Naive thymus-derived CD4-positive, alpha-beta T cell (primary cell): ENCODE measurements at regions of chr2 and their contacts with region 1.

Region 1: GRCh38 chr2:27303093-27304025 is 4.9 kb downstream of the UCN start:
- DNase-seq: peak in 8 of 9 donors; percentile 32 to 62 (median 54)
- ATAC-seq: peak; percentile 76
- H3K4me3 ChIP-seq: peak overlapping the region; percentile 43
- H3K4me3 Mint-ChIP-seq: peak overlapping the region; percentile 67 to 85 (median 80)
- H3K27ac ChIP-seq: peak overlapping the region; percentile 42
- H3K27ac Mint-ChIP-seq: peak overlapping the region in 7 of 9 donors; percentile 18 to 83 (median 54)
- H3K4me1 ChIP-seq: peaks cover 0 to 6% of the 10 kb centered on the region in 2 donors
- H3K4me1 Mint-ChIP-seq: peaks cover 0 to 11% (median 9%) of the 10 kb centered on the region in 7 donors
- H3K27me3 ChIP-seq: peaks cover 0 to 6% of the 10 kb centered on the region in 2 donors
- H3K27me3 Mint-ChIP-seq: peaks cover 13 to 34% (median 19%) of the 10 kb centered on the region in 5 donors

Region 2: DNA sequence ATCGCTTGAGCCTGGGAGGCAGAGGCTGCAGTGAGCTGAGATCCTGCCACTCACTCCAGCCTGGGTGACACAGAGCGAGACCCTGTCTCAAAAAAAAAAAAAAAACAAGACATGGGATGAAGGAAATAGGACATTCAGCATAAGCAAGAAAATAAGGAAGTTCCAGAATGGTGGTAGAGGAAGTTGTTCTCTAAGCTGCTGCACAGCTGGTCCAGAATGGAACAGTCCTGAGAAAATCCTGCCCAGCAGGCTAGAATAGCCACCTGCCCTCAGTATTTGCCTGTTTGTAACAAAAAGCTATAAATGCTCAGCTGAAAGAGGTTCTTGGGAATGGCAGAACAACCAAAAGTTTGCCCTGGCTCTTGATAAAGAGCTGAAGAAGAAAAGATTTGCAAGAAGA is 344.0 kb before region 1 on chr2:
- CTCF ChIA-PET with region 1: interaction called, 9 read pairs
- POLR2A ChIA-PET with region 1: interaction called, 4 read pairs
- intact Hi-C with region 1: loop called (anchors 1 to 2 kb)
- DNase-seq: no peak
- ATAC-seq: no peak
- H3K4me3 ChIP-seq: no peak overlapping the region
- H3K4me3 Mint-ChIP-seq: no peak overlapping the region
- H3K27ac ChIP-seq: no peak overlapping the region
- H3K27ac Mint-ChIP-seq: peak overlapping the region in 1 of 9 donors; percentile 14
- H3K4me1 ChIP-seq: no peaks in the 10 kb centered on the region
- H3K4me1 Mint-ChIP-seq: peaks cover 0 to 8% (median 0%) of the 10 kb centered on the region in 7 donors
- H3K27me3 ChIP-seq: no peaks in the 10 kb centered on the region
- H3K27me3 Mint-ChIP-seq: peaks cover 9 to 52% (median 35%) of the 10 kb centered on the region in 5 donors

Region 3: DNA sequence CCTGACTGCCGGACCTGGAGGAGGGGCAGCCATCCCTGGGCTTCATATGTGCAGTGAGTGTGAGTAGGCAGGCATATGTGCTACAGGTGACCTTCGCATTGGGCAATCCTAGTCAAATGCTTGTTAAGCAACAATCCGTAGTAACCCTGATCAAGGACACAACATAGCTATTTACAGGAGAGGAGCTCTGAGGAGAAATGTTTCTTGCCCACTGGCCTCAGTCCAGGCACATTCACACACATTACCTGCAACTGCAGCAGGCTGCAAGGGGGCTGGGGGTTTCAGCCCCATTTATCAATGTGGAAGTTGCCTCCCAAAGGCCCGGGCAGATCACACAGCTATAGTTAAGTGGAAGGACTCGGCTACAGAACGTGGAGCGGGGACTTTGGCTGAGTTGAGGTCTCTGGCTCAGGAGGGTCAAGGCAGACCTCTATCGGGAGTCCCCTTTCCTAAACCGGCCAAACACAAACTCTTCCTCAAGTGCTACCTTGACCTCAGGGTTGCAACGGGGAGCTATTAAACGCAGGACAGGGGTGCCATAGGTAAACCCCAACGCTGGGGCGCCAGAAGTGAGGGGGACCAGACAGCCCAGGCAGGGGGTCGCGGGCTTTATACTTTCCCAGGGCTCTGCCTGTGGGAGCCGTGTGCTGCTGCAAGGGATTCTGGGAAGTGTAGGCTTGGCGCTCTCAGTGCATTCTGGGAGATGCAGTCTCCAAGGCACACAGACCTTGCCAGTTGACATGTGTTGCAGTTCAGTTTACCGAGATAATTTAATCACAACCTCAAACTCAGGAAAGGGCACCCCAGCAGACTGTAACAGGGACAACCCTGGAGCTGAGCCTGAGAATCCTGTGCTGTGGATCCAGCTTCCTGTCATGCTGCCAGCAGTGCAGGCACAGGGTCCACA is 207.4 kb before region 1 on chr2:
- CTCF ChIA-PET with region 1: interaction called, 12 read pairs
- POLR2A ChIA-PET with region 1: no interaction called
- intact Hi-C with region 1: loop called (anchors 1 kb)
- DNase-seq: peak in 4 of 9 donors; percentile 21 to 44 (median 39)
- ATAC-seq: peak; percentile 80
- H3K4me3 ChIP-seq: peak overlapping the region; percentile 25
- H3K4me3 Mint-ChIP-seq: peak overlapping the region in 9 of 10 donors; percentile 29 to 76 (median 67)
- H3K27ac ChIP-seq: no peak overlapping the region
- H3K27ac Mint-ChIP-seq: peak overlapping the region in 2 of 9 donors; percentile 25 to 41
- H3K4me1 ChIP-seq: peaks cover 0 to 4% of the 10 kb centered on the region in 2 donors
- H3K4me1 Mint-ChIP-seq: peaks cover 9 to 16% (median 11%) of the 10 kb centered on the region in 7 donors
- H3K27me3 ChIP-seq: no peaks in the 10 kb centered on the region
- H3K27me3 Mint-ChIP-seq: no peaks in the 10 kb centered on the region

Region 4: GRCh38 chr2:27249891-27250651 is 53.3 kb before region 1 on chr2:
- CTCF ChIA-PET with region 1: no interaction called
- POLR2A ChIA-PET with region 1: no interaction called
- intact Hi-C with region 1: loop called (anchors 1 to 2 kb)
- DNase-seq: peak; percentile 24 to 72 (median 37)
- ATAC-seq: peak; percentile 77
- H3K4me3 ChIP-seq: no peak overlapping the region
- H3K4me3 Mint-ChIP-seq: no peak overlapping the region
- H3K27ac ChIP-seq: no peak overlapping the region
- H3K27ac Mint-ChIP-seq: no peak overlapping the region
- H3K4me1 ChIP-seq: no peaks in the 10 kb centered on the region
- H3K4me1 Mint-ChIP-seq: peaks cover 0 to 6% (median 0%) of the 10 kb centered on the region in 7 donors
- H3K27me3 ChIP-seq: peaks cover 0 to 4% of the 10 kb centered on the region in 2 donors
- H3K27me3 Mint-ChIP-seq: peaks cover 3 to 22% (median 13%) of the 10 kb centered on the region in 5 donors

Region 5: DNA sequence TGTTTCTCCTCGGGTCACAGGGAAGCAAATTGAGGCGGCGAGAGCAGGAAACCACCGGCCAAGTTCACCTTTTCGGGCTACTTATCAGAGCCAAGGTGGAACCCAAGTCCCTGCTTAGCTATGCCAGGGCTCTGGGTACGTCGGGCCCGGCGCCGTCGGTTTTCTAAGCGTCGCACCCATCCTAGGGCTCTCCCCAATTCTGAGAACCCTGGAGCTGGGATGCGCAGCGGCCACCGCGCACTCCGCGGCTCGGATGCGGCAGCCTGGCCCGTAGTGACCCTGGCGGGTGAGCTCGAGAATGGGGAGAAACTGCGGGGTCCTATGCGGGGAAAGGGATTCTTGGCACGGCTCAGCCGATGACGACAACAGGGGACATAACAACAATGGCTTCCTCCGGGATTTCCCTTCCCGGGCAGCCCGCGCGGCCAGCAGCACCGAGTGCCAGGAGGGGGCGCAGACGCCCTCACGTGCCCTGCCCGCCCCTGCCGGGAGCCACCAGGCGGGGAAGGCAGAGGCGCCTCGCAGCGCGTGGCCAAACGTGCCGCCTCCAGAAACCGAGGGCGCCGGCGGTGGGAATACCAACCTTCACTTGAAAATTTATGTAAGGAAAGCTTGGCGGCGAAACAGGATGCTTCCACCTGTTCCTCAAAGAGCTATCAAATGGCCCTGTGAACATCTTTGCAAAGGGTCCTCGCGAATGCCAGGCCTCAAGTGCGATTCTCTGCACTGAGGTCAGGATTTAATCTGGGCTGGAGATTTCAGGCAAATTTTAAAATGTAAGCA is 38.4 kb before region 1 on chr2:
- CTCF ChIA-PET with region 1: interaction called, 4 read pairs
- POLR2A ChIA-PET with region 1: no interaction called
- intact Hi-C with region 1: loop called in 1 of 2 experiments (anchors 5 kb)
- DNase-seq: peak in 8 of 9 donors; percentile 39 to 63 (median 46)
- ATAC-seq: peak; percentile 85
- H3K4me3 ChIP-seq: peak overlapping the region; percentile 59
- H3K4me3 Mint-ChIP-seq: peak overlapping the region in 9 of 10 donors; percentile 59 to 97 (median 85)
- H3K27ac ChIP-seq: no peak overlapping the region
- H3K27ac Mint-ChIP-seq: peak overlapping the region in 2 of 9 donors; percentile 2 to 38
- H3K4me1 ChIP-seq: peaks cover 8 to 23% of the 10 kb centered on the region in 2 donors
- H3K4me1 Mint-ChIP-seq: peaks cover 23 to 33% (median 29%) of the 10 kb centered on the region in 7 donors
- H3K27me3 ChIP-seq: peaks cover 6 to 18% of the 10 kb centered on the region in 2 donors
- H3K27me3 Mint-ChIP-seq: peaks cover 34 to 47% (median 40%) of the 10 kb centered on the region in 5 donors